Activated CD4-positive, alpha-beta T cell treated with anti-CD3 and anti-CD28 coated beads for 36 hours (primary cell): ENCODE measurements at regions of chr2 and their contacts with region 1.

Region 1: GRCh38 chr2:161166538-161167409 is 6.5 kb downstream of the TANK start:
- DNase-seq: peak; percentile 83
- ATAC-seq: peak; percentile 89
- H3K4me3 Mint-ChIP-seq: peak overlapping the region; percentile 54
- H3K27ac Mint-ChIP-seq: peak overlapping the region; percentile 85
- H3K4me1 Mint-ChIP-seq: peaks cover 91% of the 10 kb centered on the region
- H3K27me3 Mint-ChIP-seq: no peaks in the 10 kb centered on the region

Region 2: GRCh38 chr2:160994141-160995002 is 172.4 kb before region 1 on chr2:
- CTCF ChIA-PET with region 1: no interaction called
- POLR2A ChIA-PET with region 1: no interaction called
- intact Hi-C with region 1: no loop called
- DNase-seq: peak; percentile 79
- ATAC-seq: peak; percentile 94
- H3K4me3 Mint-ChIP-seq: no peak overlapping the region
- H3K27ac Mint-ChIP-seq: no peak overlapping the region
- H3K4me1 Mint-ChIP-seq: peaks cover 10% of the 10 kb centered on the region
- H3K27me3 Mint-ChIP-seq: no peaks in the 10 kb centered on the region

Region 3: DNA sequence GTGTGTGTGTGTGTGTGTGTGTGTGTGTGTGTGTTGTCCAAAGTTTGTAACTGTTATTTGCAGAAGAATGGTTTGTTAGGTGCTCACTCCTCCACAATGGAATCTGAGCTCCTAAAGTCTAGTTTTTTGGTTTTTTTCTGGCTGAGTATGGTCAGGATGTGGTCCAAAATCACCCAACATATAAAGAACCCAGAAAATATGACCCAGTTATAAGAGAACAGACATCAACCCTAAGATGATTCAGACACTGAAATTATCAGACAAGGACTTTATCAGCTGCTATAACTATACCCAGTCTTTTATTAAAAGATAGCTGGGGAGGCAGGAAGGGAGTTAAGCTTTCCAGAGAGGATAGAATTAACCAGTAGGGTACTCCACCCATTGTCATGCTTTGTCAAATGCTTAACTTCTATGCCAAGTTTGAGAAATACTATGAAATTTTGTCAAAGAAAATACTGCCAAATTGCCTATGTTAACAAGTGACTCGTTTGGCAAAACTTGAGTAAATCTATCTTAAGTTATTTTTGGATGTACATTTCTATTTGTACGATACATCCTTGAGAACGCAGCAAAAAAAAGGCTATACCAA is 50.9 kb after region 1 on chr2:
- CTCF ChIA-PET with region 1: no interaction called
- POLR2A ChIA-PET with region 1: interaction called, 13 read pairs
- intact Hi-C with region 1: no loop called
- DNase-seq: no peak
- ATAC-seq: no peak
- H3K4me3 Mint-ChIP-seq: no peak overlapping the region
- H3K27ac Mint-ChIP-seq: peak overlapping the region; percentile 34
- H3K4me1 Mint-ChIP-seq: peaks cover 31% of the 10 kb centered on the region
- H3K27me3 Mint-ChIP-seq: no peaks in the 10 kb centered on the region

Region 4: GRCh38 chr2:161238560-161239325 is 72.0 kb after region 1 on chr2:
- CTCF ChIA-PET with region 1: interaction called, 3 read pairs
- POLR2A ChIA-PET with region 1: no interaction called
- intact Hi-C with region 1: loop called in 1 of 2 experiments (anchors 2 kb)
- DNase-seq: peak; percentile 79
- ATAC-seq: peak; percentile 55
- H3K4me3 Mint-ChIP-seq: peak overlapping the region; percentile 76
- H3K27ac Mint-ChIP-seq: peak overlapping the region; percentile 81
- H3K4me1 Mint-ChIP-seq: peaks cover 54% of the 10 kb centered on the region
- H3K27me3 Mint-ChIP-seq: no peaks in the 10 kb centered on the region

Region 5: GRCh38 chr2:161965994-161966393 is 799.2 kb after region 1 on chr2:
- CTCF ChIA-PET with region 1: no interaction called
- POLR2A ChIA-PET with region 1: no interaction called
- intact Hi-C with region 1: loop called in 1 of 2 experiments (anchors 5 kb)
- DNase-seq: no peak
- ATAC-seq: peak; percentile 68
- H3K4me3 Mint-ChIP-seq: no peak overlapping the region
- H3K27ac Mint-ChIP-seq: no peak overlapping the region
- H3K4me1 Mint-ChIP-seq: peaks cover 26% of the 10 kb centered on the region
- H3K27me3 Mint-ChIP-seq: peaks cover 3% of the 10 kb centered on the region

Region 6: DNA sequence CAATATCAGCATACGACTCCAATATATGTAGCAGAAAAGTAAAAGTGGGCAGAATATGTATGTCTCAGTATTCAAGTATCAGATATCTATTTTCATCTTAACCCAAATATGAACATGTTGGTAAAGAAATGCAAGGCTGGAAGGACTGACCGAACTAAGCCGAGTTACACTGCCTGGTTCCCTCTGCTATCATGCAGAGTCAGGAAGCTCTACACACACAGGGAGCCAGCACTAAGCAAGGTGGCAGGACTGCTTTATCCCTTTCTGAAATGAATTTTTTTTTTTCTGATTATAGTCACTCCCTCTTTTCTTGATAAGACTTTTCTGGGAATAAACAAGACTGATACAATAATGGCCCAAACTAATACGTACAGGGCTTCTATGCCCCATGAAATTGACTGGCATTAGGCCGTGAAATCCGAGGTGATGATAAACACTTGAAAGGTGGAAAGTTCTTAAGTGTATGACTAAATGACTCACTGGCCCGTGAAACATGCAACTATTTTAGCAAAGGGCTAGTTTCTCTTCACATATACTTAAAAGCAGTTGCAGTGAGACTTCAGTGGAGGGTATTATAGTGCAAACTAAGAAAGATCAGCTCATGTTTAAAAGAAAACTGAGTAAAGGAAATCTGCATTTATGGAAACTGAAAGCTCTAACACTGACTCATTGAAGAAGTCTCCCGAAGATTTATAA is 892.3 kb after region 1 on chr2:
- CTCF ChIA-PET with region 1: no interaction called
- POLR2A ChIA-PET with region 1: no interaction called
- intact Hi-C with region 1: loop called (anchors 5 to 10 kb)
- DNase-seq: peak; percentile 54
- ATAC-seq: peak; percentile 78
- H3K4me3 Mint-ChIP-seq: peak overlapping the region; percentile 52
- H3K27ac Mint-ChIP-seq: peak overlapping the region; percentile 85
- H3K4me1 Mint-ChIP-seq: peaks cover 86% of the 10 kb centered on the region
- H3K27me3 Mint-ChIP-seq: no peaks in the 10 kb centered on the region

Region 7: DNA sequence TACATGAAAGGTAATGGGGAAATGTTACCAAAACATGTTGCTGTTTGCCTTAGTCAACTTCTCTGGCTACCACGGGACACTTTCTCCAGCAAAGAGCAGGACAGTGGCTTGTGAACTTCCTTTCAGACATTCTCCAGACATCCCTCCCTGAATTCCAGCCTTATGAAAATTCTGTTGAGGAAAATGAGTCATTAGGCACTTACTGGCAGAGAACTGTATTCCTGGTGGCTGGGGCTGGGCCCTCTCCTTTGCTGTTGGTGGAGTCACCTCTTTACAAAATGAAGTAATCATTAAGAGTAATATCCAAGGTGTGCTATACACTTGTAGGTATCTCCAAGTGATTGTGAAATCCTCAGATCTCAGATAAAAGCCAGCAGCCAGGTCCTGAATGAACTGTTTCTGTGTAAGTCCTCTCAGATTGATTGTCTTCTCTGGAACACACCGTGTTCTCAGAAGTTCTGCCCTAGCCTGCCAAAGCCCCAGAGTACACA is 1077.8 kb after region 1 on chr2:
- CTCF ChIA-PET with region 1: no interaction called
- POLR2A ChIA-PET with region 1: no interaction called
- intact Hi-C with region 1: no loop called
- DNase-seq: no peak
- ATAC-seq: no peak
- H3K4me3 Mint-ChIP-seq: no peak overlapping the region
- H3K27ac Mint-ChIP-seq: no peak overlapping the region
- H3K4me1 Mint-ChIP-seq: no peaks in the 10 kb centered on the region
- H3K27me3 Mint-ChIP-seq: peaks cover 24% of the 10 kb centered on the region